Thyroid gland (tissue), 4 donors: ENCODE measurements at regions of chr19 and their contacts with region 1.

Region 1: GRCh38 chr19:1945899-1946298 is 4.9 kb downstream of the CSNK1G2 start:
- DNase-seq: peak in 1 of 2 donors; percentile 26
- H3K4me3 ChIP-seq: no peak overlapping the region
- H3K27ac ChIP-seq: no peak overlapping the region
- H3K4me1 ChIP-seq: peaks cover 17 to 19% of the 10 kb centered on the region in 2 donors
- H3K27me3 ChIP-seq: no peaks in the 10 kb centered on the region
- CTCF ChIP-seq: peak in 5 of 6 experiments; percentile 13 to 47 (median 21)
- POLR2A ChIP-seq: no peak

Region 2: DNA sequence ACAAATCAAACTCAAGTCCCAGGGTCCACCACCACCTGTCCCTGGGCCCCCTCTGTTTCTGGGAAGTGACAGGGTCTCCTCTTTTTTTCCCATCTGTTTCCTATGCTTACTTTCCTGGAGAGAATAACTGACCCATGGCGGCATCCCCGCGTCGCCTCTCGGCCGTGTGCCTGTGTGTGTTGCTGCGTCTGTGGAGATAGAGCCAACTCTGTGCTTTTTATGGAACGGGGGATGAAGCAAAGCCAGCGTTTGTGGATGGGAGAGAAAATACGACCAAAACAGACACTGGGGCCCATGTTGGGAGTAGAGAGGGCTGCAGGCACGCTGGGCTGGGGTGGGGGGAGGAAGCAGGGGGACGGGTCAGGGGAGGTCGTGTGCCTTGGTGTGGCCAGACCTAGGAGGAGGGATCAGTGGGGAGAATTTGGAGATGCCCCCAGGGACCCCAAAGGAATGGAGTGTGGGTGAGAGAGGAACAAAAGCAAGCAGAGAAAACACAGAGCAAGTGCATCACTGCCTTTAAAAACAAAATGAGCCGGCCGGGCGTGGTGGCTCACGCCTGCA is 405.5 kb before region 1 on chr19:
- intact Hi-C with region 1: no loop called
- DNase-seq: no peak
- H3K4me3 ChIP-seq: no peak overlapping the region
- H3K27ac ChIP-seq: no peak overlapping the region
- H3K4me1 ChIP-seq: no peaks in the 10 kb centered on the region
- H3K27me3 ChIP-seq: no peaks in the 10 kb centered on the region
- CTCF ChIP-seq: no peak
- POLR2A ChIP-seq: no peak

Region 3: DNA sequence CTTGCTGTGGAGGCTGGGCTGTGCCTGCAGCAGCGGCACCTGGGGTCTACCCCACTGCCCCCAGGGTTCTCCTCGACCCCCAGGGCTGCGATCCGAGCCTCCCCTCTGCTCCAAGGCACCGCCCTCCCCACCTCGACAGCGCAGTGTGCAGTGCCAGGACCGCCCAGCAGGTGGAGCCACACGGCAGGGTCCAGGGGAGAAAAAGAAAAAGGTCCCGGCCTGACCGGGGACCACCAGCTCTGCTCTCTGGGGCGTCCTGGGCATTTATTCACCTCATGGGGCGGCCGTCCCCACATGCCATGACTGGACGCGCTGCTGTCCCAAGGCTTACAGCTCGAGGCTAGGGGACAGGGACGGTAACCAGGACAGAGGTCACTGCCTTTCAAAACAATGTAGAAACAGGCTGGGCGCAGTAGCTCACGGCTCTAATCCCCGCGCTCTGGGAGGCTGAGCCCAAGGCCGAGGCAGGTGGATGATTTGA is 108.2 kb before region 1 on chr19:
- intact Hi-C with region 1: no loop called
- DNase-seq: no peak
- H3K4me3 ChIP-seq: no peak overlapping the region
- H3K27ac ChIP-seq: no peak overlapping the region
- H3K4me1 ChIP-seq: peaks cover 7 to 43% of the 10 kb centered on the region in 2 donors
- H3K27me3 ChIP-seq: no peaks in the 10 kb centered on the region
- CTCF ChIP-seq: peak; percentile 43 to 87 (median 55)
- POLR2A ChIP-seq: no peak

Region 4: GRCh38 chr19:1875646-1876495 is 70.0 kb before region 1 on chr19:
- intact Hi-C with region 1: no loop called
- DNase-seq: peak; percentile 94 to 95
- H3K4me3 ChIP-seq: peak overlapping the region; percentile 72 to 93 (median 85)
- H3K27ac ChIP-seq: peak overlapping the region; percentile 76 to 88 (median 77)
- H3K4me1 ChIP-seq: peaks cover 27 to 32% of the 10 kb centered on the region in 2 donors
- H3K27me3 ChIP-seq: no peaks in the 10 kb centered on the region
- CTCF ChIP-seq: peak in 1 of 6 experiments; percentile 17
- POLR2A ChIP-seq: peak; percentile 56 to 87

Region 5: DNA sequence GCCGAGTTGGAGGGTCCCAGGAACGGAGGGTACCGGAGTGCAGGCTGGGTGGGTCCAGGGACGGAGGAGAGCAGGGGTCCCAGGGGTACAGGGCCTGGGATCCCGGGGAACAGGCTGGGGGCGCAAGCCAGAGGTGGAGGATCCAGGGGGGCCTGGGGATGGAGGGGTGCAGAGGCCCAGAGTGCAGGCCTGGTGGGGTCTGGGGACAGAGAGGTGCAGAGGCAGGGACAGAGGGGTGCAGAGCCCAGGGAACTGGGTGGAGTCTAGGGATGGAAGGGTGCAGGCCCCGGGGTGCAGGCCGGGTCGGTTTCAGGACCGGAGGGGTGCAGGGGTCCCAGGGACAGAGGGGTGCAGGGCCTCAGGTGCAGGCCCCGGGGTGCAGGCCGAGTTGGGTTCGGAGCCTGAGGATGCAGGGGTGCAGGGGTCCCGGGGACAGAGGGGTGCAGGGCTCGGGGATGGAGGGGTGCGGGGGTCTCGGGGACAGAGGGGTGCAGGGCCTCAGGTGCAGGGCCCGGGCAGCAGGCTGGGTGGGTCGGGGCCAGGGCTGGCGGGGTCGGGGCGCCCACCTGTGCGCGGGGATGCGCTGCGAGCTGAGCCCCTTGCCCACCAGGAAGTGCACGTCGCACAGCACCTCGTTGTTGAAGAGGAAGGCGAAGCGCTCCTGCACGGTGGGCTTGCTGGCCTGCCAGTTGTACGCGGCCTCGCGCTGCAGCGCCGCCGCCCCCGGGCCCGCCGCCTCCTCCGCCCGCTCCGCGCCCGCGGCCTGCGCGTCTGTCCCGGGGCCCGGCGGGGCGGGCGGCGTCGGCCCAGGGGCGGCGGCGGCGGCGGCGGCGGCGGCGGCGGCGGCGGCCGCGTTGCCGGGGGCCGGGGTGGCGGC is 69.1 kb after region 1 on chr19:
- intact Hi-C with region 1: loop called (anchors 5 kb)
- DNase-seq: no peak
- H3K4me3 ChIP-seq: peak overlapping the region in 2 of 3 donors; percentile 15 to 64
- H3K27ac ChIP-seq: peak overlapping the region in 1 of 3 donors; percentile 70
- H3K4me1 ChIP-seq: peaks cover 13% of the 10 kb centered on the region in 2 donors
- H3K27me3 ChIP-seq: no peaks in the 10 kb centered on the region
- CTCF ChIP-seq: no peak
- POLR2A ChIP-seq: no peak

Region 6: DNA sequence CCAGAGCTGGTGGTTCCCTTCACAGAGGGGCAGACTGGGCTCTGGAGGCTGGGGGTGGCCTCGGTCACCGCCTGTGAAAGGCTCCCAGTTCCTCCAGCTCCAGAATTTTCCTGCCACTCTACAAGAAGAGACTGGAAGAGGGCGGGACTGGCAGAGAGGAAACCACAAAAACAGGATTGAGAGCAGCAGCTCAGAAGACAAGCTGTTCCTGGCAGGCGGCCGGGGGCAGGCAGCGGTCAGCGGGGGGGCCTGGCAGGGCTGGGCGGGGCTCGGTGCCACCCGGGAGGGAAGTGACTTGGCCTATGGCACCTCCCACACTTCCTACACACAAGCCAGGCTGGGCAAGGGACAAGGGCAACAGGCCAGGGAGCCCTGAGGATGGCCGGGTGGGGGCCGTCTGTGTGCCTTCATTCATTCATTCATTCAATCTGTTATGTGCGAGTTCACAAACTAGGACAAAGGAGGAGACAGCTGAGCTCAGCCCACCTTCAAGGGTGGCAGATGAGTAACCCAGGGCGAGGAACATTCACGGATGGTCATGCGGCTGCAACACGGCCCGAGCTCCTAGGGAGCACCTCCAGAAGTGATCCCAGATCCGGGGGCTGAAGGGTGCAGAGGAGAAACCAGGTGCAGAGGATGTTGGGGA is 86.5 kb after region 1 on chr19:
- intact Hi-C with region 1: no loop called
- DNase-seq: peak; percentile 99
- H3K4me3 ChIP-seq: no peak overlapping the region
- H3K27ac ChIP-seq: peak overlapping the region; percentile 93 to 97 (median 94)
- H3K4me1 ChIP-seq: peaks cover 24 to 49% of the 10 kb centered on the region in 2 donors
- H3K27me3 ChIP-seq: no peaks in the 10 kb centered on the region
- CTCF ChIP-seq: no peak
- POLR2A ChIP-seq: peak in 1 of 2 donors; percentile 81